Activated CD4-positive, alpha-beta T cell treated with anti-CD3 and anti-CD28 coated beads for 36 hours (primary cell): ENCODE measurements at regions of chr10 and their contacts with region 1.

Region 1: GRCh38 chr10:63720072-63720537 is 198.9 kb downstream of the REEP3 start:
- DNase-seq: peak; percentile 57
- ATAC-seq: peak; percentile 49
- H3K4me3 Mint-ChIP-seq: no peak overlapping the region
- H3K27ac Mint-ChIP-seq: no peak overlapping the region
- H3K4me1 Mint-ChIP-seq: peaks cover 7% of the 10 kb centered on the region
- H3K27me3 Mint-ChIP-seq: peaks cover 10% of the 10 kb centered on the region

Region 2: DNA sequence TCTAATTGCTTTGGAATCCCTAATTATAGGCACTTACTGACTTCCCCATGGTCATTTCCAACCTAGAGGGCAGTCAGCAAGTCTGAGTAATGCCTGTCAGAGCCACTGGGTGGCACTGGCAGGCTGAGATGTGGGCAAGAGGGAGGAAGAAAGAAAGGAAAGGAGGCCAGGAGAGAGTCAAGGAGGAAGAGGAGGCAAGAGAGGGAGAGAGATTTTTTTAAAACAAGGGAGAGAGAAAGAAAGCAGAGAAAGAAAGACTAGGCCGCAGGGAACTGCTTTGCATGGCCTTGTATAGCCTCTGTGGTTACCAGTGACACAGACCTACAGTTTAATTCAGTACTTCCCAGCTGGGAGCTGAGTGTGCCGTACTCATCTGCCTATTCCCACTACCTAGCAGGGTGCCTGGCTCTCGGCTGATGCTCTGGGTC is 1126.0 kb before region 1 on chr10:
- CTCF ChIA-PET with region 1: no interaction called
- POLR2A ChIA-PET with region 1: no interaction called
- intact Hi-C with region 1: loop called in 1 of 2 experiments (anchors 10 kb)
- DNase-seq: peak; percentile 71
- ATAC-seq: peak; percentile 84
- H3K4me3 Mint-ChIP-seq: no peak overlapping the region
- H3K27ac Mint-ChIP-seq: no peak overlapping the region
- H3K4me1 Mint-ChIP-seq: peaks cover 4% of the 10 kb centered on the region
- H3K27me3 Mint-ChIP-seq: peaks cover 14% of the 10 kb centered on the region

Region 3: DNA sequence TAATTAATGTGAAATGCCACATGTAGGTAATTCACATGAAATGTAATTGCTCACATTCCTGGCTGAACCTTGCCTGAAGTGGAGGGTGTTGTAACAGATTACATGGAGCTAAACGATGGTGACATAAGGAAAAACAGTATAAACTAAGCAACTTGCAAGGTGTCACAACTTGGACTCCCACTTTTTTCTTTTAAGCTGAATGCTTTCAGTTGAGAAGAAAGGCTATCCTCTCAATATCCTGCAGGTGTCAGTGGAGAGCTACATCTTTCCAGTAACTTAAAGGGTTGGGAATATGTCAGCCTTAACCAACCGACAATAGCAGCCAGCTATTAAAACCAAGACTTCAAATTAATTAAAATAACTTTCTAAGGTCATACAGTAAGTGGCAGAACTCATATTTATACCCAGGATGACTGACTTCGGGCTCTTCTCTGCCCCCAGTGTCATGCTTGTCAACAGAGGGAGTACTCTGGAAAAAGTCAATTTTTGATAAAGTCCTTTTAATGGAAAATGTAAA is 553.3 kb before region 1 on chr10:
- CTCF ChIA-PET with region 1: interaction called, 204 read pairs
- POLR2A ChIA-PET with region 1: interaction called, 3 read pairs
- intact Hi-C with region 1: loop called (anchors 1 kb)
- DNase-seq: no peak
- ATAC-seq: peak; percentile 70
- H3K4me3 Mint-ChIP-seq: no peak overlapping the region
- H3K27ac Mint-ChIP-seq: no peak overlapping the region
- H3K4me1 Mint-ChIP-seq: peaks cover 25% of the 10 kb centered on the region
- H3K27me3 Mint-ChIP-seq: no peaks in the 10 kb centered on the region

Region 4: DNA sequence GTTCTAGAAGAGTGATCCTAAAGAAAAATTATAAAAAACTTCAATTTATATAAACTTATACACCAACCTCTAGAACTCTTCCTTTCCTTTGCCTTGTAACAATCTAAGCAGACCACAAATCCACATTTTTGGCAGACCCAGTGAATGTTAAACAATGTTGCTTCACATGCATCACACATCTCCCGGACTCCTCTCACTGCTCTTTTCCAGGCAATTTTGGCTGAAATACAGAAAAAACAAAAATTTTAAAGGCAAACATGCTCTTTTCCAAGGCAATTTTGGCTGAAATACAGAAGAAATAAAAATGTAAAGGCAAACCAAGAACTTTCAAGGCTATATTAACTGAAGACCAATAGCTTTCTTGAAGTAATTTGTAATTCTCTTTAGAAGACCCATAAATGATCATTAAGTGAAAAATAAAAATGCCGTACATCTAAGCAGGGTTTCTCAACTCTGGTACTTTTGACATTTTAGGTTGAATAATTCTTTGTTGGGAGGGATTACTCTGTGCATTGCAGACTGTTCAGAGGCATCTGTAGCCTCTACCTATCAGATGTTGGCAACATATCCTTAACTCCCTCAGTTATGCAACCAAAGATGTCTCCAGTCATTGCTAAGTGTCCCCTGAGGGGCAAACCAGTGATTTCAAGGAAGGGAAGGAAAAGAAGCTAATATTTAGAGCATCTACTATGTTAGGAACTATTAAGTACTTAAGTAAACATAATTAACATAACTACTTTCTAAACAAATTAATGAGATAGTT is 522.6 kb before region 1 on chr10:
- CTCF ChIA-PET with region 1: interaction called, 14 read pairs
- POLR2A ChIA-PET with region 1: no interaction called
- intact Hi-C with region 1: no loop called
- DNase-seq: no peak
- ATAC-seq: no peak
- H3K4me3 Mint-ChIP-seq: no peak overlapping the region
- H3K27ac Mint-ChIP-seq: no peak overlapping the region
- H3K4me1 Mint-ChIP-seq: no peaks in the 10 kb centered on the region
- H3K27me3 Mint-ChIP-seq: no peaks in the 10 kb centered on the region

Region 5: GRCh38 chr10:63227207-63227915 is 492.7 kb before region 1 on chr10:
- CTCF ChIA-PET with region 1: interaction called, 10 read pairs
- POLR2A ChIA-PET with region 1: no interaction called
- intact Hi-C with region 1: no loop called
- DNase-seq: no peak
- ATAC-seq: peak; percentile 45
- H3K4me3 Mint-ChIP-seq: peak overlapping the region; percentile 52
- H3K27ac Mint-ChIP-seq: peak overlapping the region; percentile 88
- H3K4me1 Mint-ChIP-seq: peaks cover 53% of the 10 kb centered on the region
- H3K27me3 Mint-ChIP-seq: no peaks in the 10 kb centered on the region

Region 6: DNA sequence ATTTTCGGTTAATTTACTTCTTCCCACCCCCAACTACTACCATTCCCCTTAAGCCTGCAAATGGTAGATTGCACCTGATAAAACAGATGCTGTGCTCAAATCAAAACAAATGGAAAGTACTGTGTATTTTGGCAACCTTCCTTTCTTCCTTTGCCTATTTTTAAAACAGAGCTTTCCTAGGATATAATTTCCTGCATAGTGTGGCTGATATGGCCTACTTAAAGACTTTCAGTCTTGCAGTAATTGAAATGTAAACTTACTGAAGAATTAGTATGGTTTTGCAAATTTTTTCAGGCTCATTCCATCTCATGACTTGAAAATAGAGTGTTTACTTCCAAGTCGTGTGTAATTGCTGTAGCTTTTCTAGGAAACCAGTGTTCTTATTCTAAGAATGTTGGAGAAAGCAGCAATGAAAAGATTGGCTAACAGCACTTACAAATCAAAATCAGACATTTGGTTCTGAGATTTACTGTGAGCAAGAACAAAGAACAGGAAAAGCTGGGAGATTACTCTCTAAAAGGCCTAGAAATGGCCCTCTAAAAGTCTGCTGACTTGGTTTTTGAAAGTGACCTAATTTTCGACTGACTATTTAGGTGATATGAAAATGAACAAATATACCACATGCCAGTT is 146.9 kb before region 1 on chr10:
- CTCF ChIA-PET with region 1: interaction called, 10 read pairs
- POLR2A ChIA-PET with region 1: no interaction called
- intact Hi-C with region 1: no loop called
- DNase-seq: no peak
- ATAC-seq: peak; percentile 88
- H3K4me3 Mint-ChIP-seq: no peak overlapping the region
- H3K27ac Mint-ChIP-seq: peak overlapping the region; percentile 55
- H3K4me1 Mint-ChIP-seq: peaks cover 13% of the 10 kb centered on the region
- H3K27me3 Mint-ChIP-seq: no peaks in the 10 kb centered on the region

Region 7: DNA sequence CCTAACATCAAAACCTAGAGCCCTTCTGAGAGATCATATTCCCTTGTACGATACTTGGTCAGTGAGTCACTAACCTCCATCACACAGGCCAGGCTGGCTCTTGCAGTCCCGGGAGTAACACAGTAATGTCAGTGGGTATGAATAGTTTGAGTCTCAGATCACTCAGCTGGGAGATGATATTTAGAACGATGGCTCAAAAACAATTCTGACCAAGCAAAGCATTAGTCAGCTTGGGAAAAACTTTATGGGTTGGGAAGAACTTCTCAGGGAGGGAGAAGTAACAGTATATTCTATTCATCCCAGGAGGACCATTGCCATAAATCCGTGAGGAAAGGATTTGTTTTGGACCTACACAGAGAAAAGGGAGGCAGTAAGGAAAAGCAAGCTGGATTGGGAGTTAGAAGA is 19.9 kb before region 1 on chr10:
- CTCF ChIA-PET with region 1: interaction called, 14 read pairs
- POLR2A ChIA-PET with region 1: no interaction called
- intact Hi-C with region 1: no loop called
- DNase-seq: peak; percentile 46
- ATAC-seq: peak; percentile 98
- H3K4me3 Mint-ChIP-seq: no peak overlapping the region
- H3K27ac Mint-ChIP-seq: no peak overlapping the region
- H3K4me1 Mint-ChIP-seq: peaks cover 5% of the 10 kb centered on the region
- H3K27me3 Mint-ChIP-seq: peaks cover 2% of the 10 kb centered on the region